PC-3 (cell line): ENCODE measurements at regions of chr12 and their contacts with region 1.

Region 1: DNA sequence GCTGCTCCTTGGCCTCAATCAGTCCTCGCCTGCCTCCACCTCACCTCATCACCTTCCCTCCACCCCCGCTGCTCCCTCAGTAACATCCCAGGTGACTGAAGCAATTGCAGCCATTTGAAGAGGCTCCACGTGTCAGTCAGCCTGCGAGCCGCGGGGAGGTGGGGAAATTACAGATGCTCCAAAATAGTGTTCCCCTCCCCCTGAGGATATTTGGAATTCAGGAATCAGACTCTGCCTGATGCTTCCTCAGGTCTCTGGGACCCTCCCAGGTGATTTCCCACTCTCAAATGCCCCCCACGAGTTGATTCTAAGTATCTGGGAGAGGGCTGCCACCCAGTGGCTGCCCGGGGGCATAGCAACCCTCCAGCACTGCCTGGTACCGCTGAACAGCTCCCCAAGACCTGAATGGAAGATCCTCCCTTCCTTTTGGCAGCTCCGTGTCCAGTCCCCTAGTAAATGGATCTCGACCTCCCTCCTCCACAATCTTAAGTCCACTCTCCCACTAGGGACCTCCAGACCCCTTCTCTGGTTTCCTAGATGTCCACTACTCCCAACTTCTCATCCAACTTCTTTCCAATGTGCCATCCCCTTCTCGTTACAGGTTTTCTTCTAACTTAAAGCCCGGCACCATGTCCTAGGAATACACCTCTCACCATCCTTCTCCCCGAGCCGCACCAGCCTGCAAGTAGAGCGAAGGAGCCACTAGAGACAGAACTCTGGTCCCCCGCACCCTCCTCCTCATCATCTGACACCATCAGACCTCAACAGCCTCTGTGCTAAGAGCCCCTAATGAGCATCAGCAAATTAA is 1.4 kb upstream of the ASIC1 start:
- DNase-seq: peak; percentile 58
- ATAC-seq: peak; percentile 35
- H3K4me3 ChIP-seq: peak overlapping the region; percentile 39; the same call in 1 of the 2 replicates
- H3K27ac ChIP-seq: no peak overlapping the region
- H3K4me1 ChIP-seq: peaks cover 11% of the 10 kb centered on the region
- H3K27me3 ChIP-seq: no peaks in the 10 kb centered on the region
- CTCF ChIP-seq: peak; percentile 95

Region 2: DNA sequence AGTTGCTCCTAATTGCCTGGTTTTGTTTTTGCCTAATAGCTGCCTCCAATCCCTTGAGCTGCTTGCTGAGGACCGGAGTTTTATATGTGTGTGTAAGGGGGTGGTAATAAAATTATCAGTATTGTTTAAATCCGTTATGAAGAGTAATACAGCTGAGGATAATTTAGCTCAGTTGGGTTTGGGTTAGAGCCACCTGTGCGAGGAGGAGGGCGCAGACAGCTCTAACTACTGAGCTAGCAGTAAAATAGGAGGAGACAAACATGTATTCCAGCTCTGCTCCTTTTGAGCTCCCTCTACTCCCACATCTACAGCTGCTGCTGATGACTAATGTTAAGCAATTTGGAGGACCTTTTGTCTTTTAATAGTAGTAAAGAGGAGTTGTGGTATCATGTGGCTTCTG is 627.2 kb before region 1 on chr12:
- CTCF ChIA-PET with region 1: no interaction called
- POLR2A ChIA-PET with region 1: no interaction called
- intact Hi-C with region 1: no loop called
- DNase-seq: peak; percentile 32
- ATAC-seq: peak; percentile 83
- H3K4me3 ChIP-seq: no peak overlapping the region
- H3K27ac ChIP-seq: no peak overlapping the region
- H3K4me1 ChIP-seq: 0 out of 2 replicates have a peak, but pooled peaks cover 4% of the 10 kb centered on the region
- H3K27me3 ChIP-seq: no peaks in the 10 kb centered on the region
- CTCF ChIP-seq: no peak

Region 3: GRCh38 chr12:49866859-49867579 is 189.0 kb before region 1 on chr12:
- CTCF ChIA-PET with region 1: no interaction called
- POLR2A ChIA-PET with region 1: no interaction called
- intact Hi-C with region 1: loop called (anchors 1 kb)
- DNase-seq: peak; percentile 87
- ATAC-seq: peak; percentile 84
- H3K4me3 ChIP-seq: no peak overlapping the region
- H3K27ac ChIP-seq: no peak overlapping the region
- H3K4me1 ChIP-seq: peaks cover 8% of the 10 kb centered on the region
- H3K27me3 ChIP-seq: no peaks in the 10 kb centered on the region
- CTCF ChIP-seq: peak; percentile 96

Region 4: GRCh38 chr12:49967042-49967776 is 88.8 kb before region 1 on chr12:
- CTCF ChIA-PET with region 1: interaction called, 22 read pairs
- POLR2A ChIA-PET with region 1: no interaction called
- intact Hi-C with region 1: loop called (anchors 1 kb)
- DNase-seq: peak; percentile 82
- ATAC-seq: peak; percentile 62
- H3K4me3 ChIP-seq: peak overlapping the region; percentile 65
- H3K27ac ChIP-seq: no peak overlapping the region
- H3K4me1 ChIP-seq: peaks cover 18% of the 10 kb centered on the region
- H3K27me3 ChIP-seq: no peaks in the 10 kb centered on the region
- CTCF ChIP-seq: peak; percentile 81

Region 5: DNA sequence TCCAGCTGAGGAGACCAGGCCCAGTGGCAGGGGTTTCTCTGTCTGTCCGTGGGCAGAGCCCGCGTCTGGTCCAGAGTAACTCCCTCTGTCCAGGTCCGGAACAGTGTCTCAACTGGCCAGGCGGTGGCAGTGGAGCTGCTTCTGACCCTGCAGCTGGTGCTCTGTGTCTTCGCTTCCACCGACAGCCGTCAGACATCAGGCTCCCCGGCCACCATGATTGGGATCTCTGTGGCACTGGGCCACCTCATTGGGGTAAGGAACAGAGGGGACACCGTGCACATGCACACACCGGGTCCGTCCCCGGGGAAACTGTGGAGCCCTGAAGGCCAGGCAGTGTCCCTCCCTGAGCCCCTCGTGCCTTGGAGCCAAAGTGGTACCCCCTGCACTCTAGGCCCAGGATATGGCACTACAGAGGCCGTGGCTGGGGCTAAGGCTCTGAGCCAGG is 81.8 kb before region 1 on chr12:
- CTCF ChIA-PET with region 1: interaction called, 4 read pairs
- POLR2A ChIA-PET with region 1: no interaction called
- intact Hi-C with region 1: loop called (anchors 2 kb)
- DNase-seq: peak; percentile 38
- ATAC-seq: peak; percentile 93
- H3K4me3 ChIP-seq: no peak overlapping the region
- H3K27ac ChIP-seq: no peak overlapping the region
- H3K4me1 ChIP-seq: no peaks in the 10 kb centered on the region
- H3K27me3 ChIP-seq: no peaks in the 10 kb centered on the region
- CTCF ChIP-seq: peak; percentile 53